ENCODE measurements at regions of chr22 and their contacts with region 1.

Region 1: GRCh38 chr22:22576244-22576988 is 17.4 kb upstream of the PRAME start:
- DNase-seq: peak; percentile 51
- ATAC-seq: peak; percentile 24
- H3K4me3 Mint-ChIP-seq: no peak overlapping the region
- H3K27ac Mint-ChIP-seq: no peak overlapping the region
- H3K4me1 Mint-ChIP-seq: no peaks in the 10 kb centered on the region
- H3K27me3 Mint-ChIP-seq: peaks cover 2% of the 10 kb centered on the region
- CTCF ChIP-seq: peak; percentile 77

Region 2: GRCh38 chr22:22565981-22566380 is 10.4 kb before region 1 on chr22:
- CTCF ChIA-PET with region 1: interaction called, 11 read pairs
- POLR2A ChIA-PET with region 1: no interaction called
- intact Hi-C with region 1: no loop called
- DNase-seq: no peak
- ATAC-seq: no peak
- H3K4me3 Mint-ChIP-seq: no peak overlapping the region
- H3K27ac Mint-ChIP-seq: no peak overlapping the region
- H3K4me1 Mint-ChIP-seq: no peaks in the 10 kb centered on the region
- H3K27me3 Mint-ChIP-seq: peaks cover 18% of the 10 kb centered on the region
- CTCF ChIP-seq: no peak